ENCODE measurements at regions of chr1 and their contacts with region 1.

Region 1: GRCh38 chr1:36306902-36307456 is 811 bp downstream of the SH3D21 start:
- DNase-seq: peak; percentile 94
- H3K4me3 Mint-ChIP-seq: peak overlapping the region; percentile 97
- H3K27ac Mint-ChIP-seq: peak overlapping the region; percentile 89
- H3K4me1 Mint-ChIP-seq: peaks cover 39% of the 10 kb centered on the region
- H3K27me3 Mint-ChIP-seq: no peaks in the 10 kb centered on the region

Region 2: GRCh38 chr1:36285448-36286101 is 21.4 kb before region 1 on chr1:
- intact Hi-C with region 1: loop called (anchors 1 kb)
- DNase-seq: peak; percentile 53
- H3K4me3 Mint-ChIP-seq: no peak overlapping the region
- H3K27ac Mint-ChIP-seq: peak overlapping the region; percentile 63
- H3K4me1 Mint-ChIP-seq: peaks cover 42% of the 10 kb centered on the region
- H3K27me3 Mint-ChIP-seq: no peaks in the 10 kb centered on the region

Region 3: GRCh38 chr1:36323597-36324352 is 16.8 kb after region 1 on chr1 and contains the start of gene EVA1B:
- intact Hi-C with region 1: loop called (anchors 1 kb)
- DNase-seq: peak; percentile 60
- H3K4me3 Mint-ChIP-seq: peak within 1 kb of the TSS; percentile 80
- H3K27ac Mint-ChIP-seq: peak within 1 kb of the TSS; percentile 64
- H3K4me1 Mint-ChIP-seq: peaks cover 31% of the 10 kb centered on the region
- H3K27me3 Mint-ChIP-seq: peaks cover 6% of the 10 kb centered on the region
- total RNA-seq, gene EVA1B: 10.6 and 10.9 TPM in 2 replicates

Region 4: DNA sequence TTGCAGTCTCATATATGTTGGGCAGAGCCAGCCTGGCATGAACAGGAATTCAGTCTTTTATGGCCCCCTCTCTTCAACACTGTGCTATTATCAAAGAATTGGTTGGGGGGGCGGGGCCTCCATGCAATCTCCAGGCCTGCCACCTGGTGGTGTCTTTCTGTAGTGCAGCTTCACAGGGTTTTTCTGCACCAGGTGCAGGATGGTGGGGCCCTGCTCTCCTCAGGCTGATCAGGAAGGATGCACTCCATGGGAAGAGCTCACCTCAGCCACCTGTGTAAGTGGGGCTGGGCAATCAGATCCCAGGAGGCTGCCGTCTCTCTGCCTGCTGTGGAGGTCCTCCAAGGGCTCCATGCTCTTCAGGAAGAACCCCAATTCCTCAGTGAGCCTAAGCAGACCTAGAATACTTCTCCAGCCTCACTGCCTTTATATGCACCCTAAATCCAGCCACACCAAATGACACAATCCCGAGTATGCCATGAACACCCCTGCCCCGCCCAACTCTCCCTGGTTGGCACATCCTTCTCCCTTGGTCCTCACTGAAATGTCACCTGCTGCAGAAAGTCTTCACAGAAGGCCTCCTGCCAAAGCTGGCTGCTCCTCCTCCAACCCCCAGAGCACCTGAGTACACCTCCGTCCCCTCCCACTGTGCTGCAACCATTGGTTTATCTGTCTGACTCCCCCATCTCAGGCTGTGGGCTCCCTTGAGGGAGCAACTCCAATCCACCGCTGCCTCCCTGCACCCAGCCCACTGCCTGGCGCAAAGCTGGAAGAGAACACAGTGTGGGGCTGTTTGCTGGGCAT is 62.3 kb after region 1 on chr1:
- intact Hi-C with region 1: loop called (anchors 1 kb)
- DNase-seq: peak; percentile 65
- H3K4me3 Mint-ChIP-seq: no peak overlapping the region
- H3K27ac Mint-ChIP-seq: peak overlapping the region; percentile 35
- H3K4me1 Mint-ChIP-seq: peaks cover 69% of the 10 kb centered on the region
- H3K27me3 Mint-ChIP-seq: no peaks in the 10 kb centered on the region

Region 5: GRCh38 chr1:36397378-36398230 is 90.6 kb after region 1 on chr1 and contains the start of gene LSM10:
- intact Hi-C with region 1: loop called (anchors 1 kb)
- DNase-seq: peak; percentile 88
- H3K4me3 Mint-ChIP-seq: peak within 1 kb of the TSS; percentile 97
- H3K27ac Mint-ChIP-seq: peak within 1 kb of the TSS; percentile 98
- H3K4me1 Mint-ChIP-seq: peaks cover 29% of the 10 kb centered on the region
- H3K27me3 Mint-ChIP-seq: no peaks in the 10 kb centered on the region
- total RNA-seq, gene LSM10: 57.5 and 63.8 TPM in 2 replicates

Measured in activated T-helper 1 cell treated with anti-CD3 and anti-CD28 coated beads, Interleukin-12 subunit alpha, Interleukin-12 subunit beta, Interleukin-2, Interleukin-4 antibody, amounts not matched to agents 30 ng/mL and 10 ng/mL and 1 ng/mL, durations not matched to agents 14 hours and 24 hours and 36 hours (primary cell).